B cell (primary cell): ENCODE measurements at regions of chr3 and their contacts with region 1.

Region 1: GRCh38 chr3:59575113-59576001 is 525.5 kb upstream of the CFAP20DC start:
- DNase-seq: peak; percentile 76
- ATAC-seq: peak; percentile 75
- H3K4me3 ChIP-seq: no peak overlapping the region
- H3K4me3 Mint-ChIP-seq: no peak overlapping the region
- H3K27ac ChIP-seq: no peak overlapping the region
- H3K27ac Mint-ChIP-seq: no peak overlapping the region
- H3K4me1 ChIP-seq: peaks cover 0 to 3% of the 10 kb centered on the region in 2 donors
- H3K4me1 Mint-ChIP-seq: peaks cover 3% of the 10 kb centered on the region
- H3K27me3 ChIP-seq: no peaks in the 10 kb centered on the region
- H3K27me3 Mint-ChIP-seq: no peaks in the 10 kb centered on the region
- CTCF ChIP-seq: peak; percentile 99

Region 2: GRCh38 chr3:58994746-58995330 is 580.5 kb before region 1 on chr3:
- CTCF ChIA-PET with region 1: interaction called, 3 read pairs
- POLR2A ChIA-PET with region 1: no interaction called
- intact Hi-C with region 1: loop called (anchors 5 kb)
- DNase-seq: peak; percentile 49
- ATAC-seq: no peak
- H3K4me3 ChIP-seq: no peak overlapping the region
- H3K4me3 Mint-ChIP-seq: no peak overlapping the region
- H3K27ac ChIP-seq: no peak overlapping the region
- H3K27ac Mint-ChIP-seq: no peak overlapping the region
- H3K4me1 ChIP-seq: no peaks in the 10 kb centered on the region
- H3K4me1 Mint-ChIP-seq: peaks cover 6% of the 10 kb centered on the region
- H3K27me3 ChIP-seq: no peaks in the 10 kb centered on the region
- H3K27me3 Mint-ChIP-seq: no peaks in the 10 kb centered on the region
- CTCF ChIP-seq: peak; percentile 60

Region 3: GRCh38 chr3:59212128-59212779 is 363.1 kb before region 1 on chr3:
- CTCF ChIA-PET with region 1: interaction called, 6 read pairs
- POLR2A ChIA-PET with region 1: no interaction called
- intact Hi-C with region 1: loop called (anchors 1 kb)
- DNase-seq: peak; percentile 50
- ATAC-seq: no peak
- H3K4me3 ChIP-seq: no peak overlapping the region
- H3K4me3 Mint-ChIP-seq: no peak overlapping the region
- H3K27ac ChIP-seq: no peak overlapping the region
- H3K27ac Mint-ChIP-seq: no peak overlapping the region
- H3K4me1 ChIP-seq: no peaks in the 10 kb centered on the region
- H3K4me1 Mint-ChIP-seq: no peaks in the 10 kb centered on the region
- H3K27me3 ChIP-seq: no peaks in the 10 kb centered on the region
- H3K27me3 Mint-ChIP-seq: peaks cover 9% of the 10 kb centered on the region
- CTCF ChIP-seq: peak; percentile 81

Region 4: DNA sequence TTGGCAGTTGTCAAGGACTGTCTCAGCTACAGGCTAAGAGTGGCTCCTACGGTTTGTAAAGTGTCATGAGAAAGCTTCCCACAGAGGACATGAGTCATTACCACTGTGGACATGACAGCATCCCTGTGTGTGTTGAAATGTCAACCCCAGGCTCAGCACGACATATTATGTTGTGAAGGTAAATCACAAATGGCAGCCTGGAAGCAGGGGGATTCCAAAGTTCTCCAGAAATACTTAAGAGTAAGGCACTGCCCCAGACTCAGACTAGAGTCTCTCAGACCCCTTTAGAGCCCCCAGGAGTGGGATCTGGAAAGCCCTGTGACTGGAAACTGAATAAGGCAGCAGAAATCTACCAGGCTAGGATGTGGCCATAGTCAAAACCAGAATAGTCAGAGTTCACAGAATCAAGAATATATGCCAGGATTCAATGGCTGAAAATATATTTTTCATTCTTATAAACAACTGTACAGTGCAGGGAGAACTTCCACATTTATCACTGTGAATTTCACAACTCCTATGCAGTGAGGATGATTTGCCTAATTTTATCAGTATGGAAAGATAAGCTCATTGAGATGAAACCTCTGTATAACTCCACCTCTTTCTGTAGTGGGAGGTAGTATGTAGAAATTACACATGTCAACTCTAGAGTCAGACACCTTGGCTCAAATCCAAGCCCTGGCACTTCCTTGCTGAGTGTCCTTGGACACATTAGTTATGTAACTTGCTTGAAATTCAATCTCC is 288.4 kb before region 1 on chr3:
- CTCF ChIA-PET with region 1: no interaction called
- POLR2A ChIA-PET with region 1: no interaction called
- intact Hi-C with region 1: no loop called
- DNase-seq: no peak
- ATAC-seq: no peak
- H3K4me3 ChIP-seq: no peak overlapping the region
- H3K4me3 Mint-ChIP-seq: no peak overlapping the region
- H3K27ac ChIP-seq: no peak overlapping the region
- H3K27ac Mint-ChIP-seq: no peak overlapping the region
- H3K4me1 ChIP-seq: no peaks in the 10 kb centered on the region
- H3K4me1 Mint-ChIP-seq: no peaks in the 10 kb centered on the region
- H3K27me3 ChIP-seq: no peaks in the 10 kb centered on the region
- H3K27me3 Mint-ChIP-seq: no peaks in the 10 kb centered on the region
- CTCF ChIP-seq: no peak

Region 5: DNA sequence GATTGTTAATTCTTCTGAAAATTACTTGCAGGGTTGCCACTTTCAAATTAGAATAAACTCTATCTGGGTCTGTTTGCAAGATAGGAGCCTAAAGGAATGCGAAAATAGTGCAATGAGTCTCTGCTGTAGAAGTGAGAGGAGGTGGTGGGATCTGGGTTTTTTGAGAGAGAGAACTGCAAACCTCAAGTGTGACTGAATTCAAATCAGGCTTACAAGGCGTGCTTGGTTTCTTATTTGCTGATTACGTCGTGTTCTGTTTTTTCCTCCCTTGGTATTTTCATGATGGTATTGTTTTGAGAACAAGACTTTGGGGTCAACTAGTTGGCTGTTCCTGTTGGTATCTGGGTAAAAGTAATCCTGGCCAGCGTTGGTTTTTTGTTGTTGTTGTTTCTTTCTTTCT is 34.7 kb before region 1 on chr3:
- CTCF ChIA-PET with region 1: no interaction called
- POLR2A ChIA-PET with region 1: no interaction called
- intact Hi-C with region 1: no loop called
- DNase-seq: no peak
- ATAC-seq: no peak
- H3K4me3 ChIP-seq: no peak overlapping the region
- H3K4me3 Mint-ChIP-seq: no peak overlapping the region
- H3K27ac ChIP-seq: no peak overlapping the region
- H3K27ac Mint-ChIP-seq: no peak overlapping the region
- H3K4me1 ChIP-seq: no peaks in the 10 kb centered on the region
- H3K4me1 Mint-ChIP-seq: peaks cover 3% of the 10 kb centered on the region
- H3K27me3 ChIP-seq: no peaks in the 10 kb centered on the region
- H3K27me3 Mint-ChIP-seq: no peaks in the 10 kb centered on the region
- CTCF ChIP-seq: no peak

Region 6: GRCh38 chr3:59593380-59593779 is 18.0 kb after region 1 on chr3:
- CTCF ChIA-PET with region 1: interaction called, 10 read pairs
- POLR2A ChIA-PET with region 1: no interaction called
- intact Hi-C with region 1: no loop called
- DNase-seq: no peak
- ATAC-seq: no peak
- H3K4me3 ChIP-seq: no peak overlapping the region
- H3K4me3 Mint-ChIP-seq: no peak overlapping the region
- H3K27ac ChIP-seq: no peak overlapping the region
- H3K27ac Mint-ChIP-seq: no peak overlapping the region
- H3K4me1 ChIP-seq: no peaks in the 10 kb centered on the region
- H3K4me1 Mint-ChIP-seq: no peaks in the 10 kb centered on the region
- H3K27me3 ChIP-seq: no peaks in the 10 kb centered on the region
- H3K27me3 Mint-ChIP-seq: peaks cover 4% of the 10 kb centered on the region
- CTCF ChIP-seq: no peak

Region 7: DNA sequence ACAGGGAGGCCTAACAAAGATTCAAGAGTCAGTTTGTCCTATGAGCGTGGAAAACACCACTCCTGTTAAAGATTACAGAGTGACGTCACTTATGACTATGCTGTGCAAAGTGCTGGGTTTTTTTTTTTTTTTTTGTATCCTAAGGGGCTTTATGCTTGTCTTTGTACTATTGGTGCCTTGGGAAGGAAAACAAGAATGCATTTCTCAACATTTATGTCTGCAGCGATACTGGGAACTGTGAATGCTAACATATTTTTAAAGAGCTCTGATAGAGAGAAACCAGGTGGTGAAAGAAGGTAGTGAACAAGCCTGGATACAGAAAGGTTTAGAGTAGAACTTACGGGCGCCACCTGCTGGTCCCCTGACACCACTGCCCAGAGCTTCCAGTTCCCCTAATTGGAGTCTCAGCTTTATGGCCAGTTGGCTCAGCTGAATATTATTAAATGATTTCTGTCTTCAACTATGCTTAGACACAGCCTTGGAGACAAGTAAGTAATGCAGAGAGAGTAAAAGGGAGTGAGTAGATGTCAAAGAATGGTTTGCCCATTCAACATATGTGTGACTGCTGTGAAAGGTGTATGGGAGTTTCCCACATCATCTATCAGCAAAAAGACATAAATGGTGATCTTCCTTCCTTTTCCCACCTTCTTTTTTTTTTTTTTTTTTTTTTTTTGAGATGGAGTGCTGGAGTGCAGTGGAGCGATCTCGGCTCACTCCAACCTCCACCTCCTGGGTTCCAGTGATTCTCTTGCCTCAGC is 282.4 kb after region 1 on chr3:
- CTCF ChIA-PET with region 1: interaction called, 73 read pairs
- POLR2A ChIA-PET with region 1: no interaction called
- intact Hi-C with region 1: loop called (anchors 1 kb)
- DNase-seq: peak; percentile 78
- ATAC-seq: peak; percentile 90
- H3K4me3 ChIP-seq: no peak overlapping the region
- H3K4me3 Mint-ChIP-seq: no peak overlapping the region
- H3K27ac ChIP-seq: no peak overlapping the region
- H3K27ac Mint-ChIP-seq: no peak overlapping the region
- H3K4me1 ChIP-seq: no peaks in the 10 kb centered on the region
- H3K4me1 Mint-ChIP-seq: peaks cover 2% of the 10 kb centered on the region
- H3K27me3 ChIP-seq: no peaks in the 10 kb centered on the region
- H3K27me3 Mint-ChIP-seq: no peaks in the 10 kb centered on the region
- CTCF ChIP-seq: peak; percentile 93

Region 8: DNA sequence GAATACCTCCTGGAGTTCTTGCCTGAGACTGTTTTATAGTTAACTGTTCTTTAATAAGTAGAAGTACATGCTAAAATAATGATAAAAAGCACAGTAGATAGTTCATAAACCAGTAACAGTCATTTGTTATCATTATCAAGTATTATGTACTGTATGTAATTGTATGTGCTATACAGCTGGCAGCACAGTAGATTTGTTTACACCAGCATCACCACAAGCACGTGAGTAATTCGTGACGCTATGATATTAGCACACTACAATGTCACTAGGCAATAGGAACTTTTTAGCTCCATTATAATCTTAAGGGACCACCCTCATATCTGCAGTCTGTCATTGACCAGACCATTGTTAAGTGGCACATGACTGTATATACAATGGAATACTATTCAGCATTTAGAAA is 1141.2 kb after region 1 on chr3:
- CTCF ChIA-PET with region 1: no interaction called
- POLR2A ChIA-PET with region 1: no interaction called
- intact Hi-C with region 1: no loop called
- DNase-seq: no peak
- ATAC-seq: no peak
- H3K4me3 ChIP-seq: no peak overlapping the region
- H3K4me3 Mint-ChIP-seq: no peak overlapping the region
- H3K27ac ChIP-seq: no peak overlapping the region
- H3K27ac Mint-ChIP-seq: no peak overlapping the region
- H3K4me1 ChIP-seq: no peaks in the 10 kb centered on the region
- H3K4me1 Mint-ChIP-seq: no peaks in the 10 kb centered on the region
- H3K27me3 ChIP-seq: no peaks in the 10 kb centered on the region
- H3K27me3 Mint-ChIP-seq: no peaks in the 10 kb centered on the region
- CTCF ChIP-seq: no peak

Region 9: DNA sequence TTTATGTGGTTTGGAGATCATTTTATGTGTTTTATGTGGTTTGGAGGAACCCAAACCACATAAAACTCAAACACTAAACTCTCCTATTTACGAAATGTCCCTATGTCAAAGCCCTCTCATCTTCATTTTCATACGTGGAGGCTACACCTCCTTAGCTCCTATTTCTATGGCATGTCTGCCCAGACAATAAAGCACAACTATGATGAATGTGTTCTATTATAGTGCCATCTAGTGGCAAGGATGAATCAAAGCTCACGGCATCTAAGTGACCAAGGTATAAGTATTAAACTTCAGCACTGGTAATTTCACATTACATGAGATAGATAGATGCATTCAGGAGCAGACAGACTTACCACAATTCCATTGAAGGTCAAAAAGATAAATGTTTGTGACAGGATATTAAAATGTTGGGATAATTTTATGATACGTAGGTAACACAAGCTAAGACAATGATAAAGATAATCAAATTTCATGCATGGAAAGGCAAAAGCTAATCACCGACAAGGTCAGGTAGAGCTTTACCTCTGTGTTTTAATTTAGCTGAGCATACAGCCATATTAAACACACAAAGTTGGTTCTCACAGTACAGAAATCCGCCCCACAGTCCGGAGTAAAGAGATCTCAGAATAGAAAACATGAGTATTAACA is 1806.5 kb after region 1 on chr3:
- CTCF ChIA-PET with region 1: interaction called, 23 read pairs
- POLR2A ChIA-PET with region 1: no interaction called
- intact Hi-C with region 1: loop called (anchors 1 kb)
- DNase-seq: peak; percentile 44
- ATAC-seq: peak; percentile 31
- H3K4me3 ChIP-seq: no peak overlapping the region
- H3K4me3 Mint-ChIP-seq: no peak overlapping the region
- H3K27ac ChIP-seq: no peak overlapping the region
- H3K27ac Mint-ChIP-seq: no peak overlapping the region
- H3K4me1 ChIP-seq: no peaks in the 10 kb centered on the region
- H3K4me1 Mint-ChIP-seq: no peaks in the 10 kb centered on the region
- H3K27me3 ChIP-seq: peaks cover 0 to 3% (median 0%) of the 10 kb centered on the region in 4 experiments
- H3K27me3 Mint-ChIP-seq: peaks cover 9% of the 10 kb centered on the region
- CTCF ChIP-seq: peak; percentile 86